Dendritic cell treated with granulocyte-macrophage colony-stimulating factor and Interleukin-4, amounts not matched to agents 40 ng/mL and 50 ng/mL, for 4 days (primary cell): ENCODE measurements at regions of chr9 and their contacts with region 1.

Region 1: DNA sequence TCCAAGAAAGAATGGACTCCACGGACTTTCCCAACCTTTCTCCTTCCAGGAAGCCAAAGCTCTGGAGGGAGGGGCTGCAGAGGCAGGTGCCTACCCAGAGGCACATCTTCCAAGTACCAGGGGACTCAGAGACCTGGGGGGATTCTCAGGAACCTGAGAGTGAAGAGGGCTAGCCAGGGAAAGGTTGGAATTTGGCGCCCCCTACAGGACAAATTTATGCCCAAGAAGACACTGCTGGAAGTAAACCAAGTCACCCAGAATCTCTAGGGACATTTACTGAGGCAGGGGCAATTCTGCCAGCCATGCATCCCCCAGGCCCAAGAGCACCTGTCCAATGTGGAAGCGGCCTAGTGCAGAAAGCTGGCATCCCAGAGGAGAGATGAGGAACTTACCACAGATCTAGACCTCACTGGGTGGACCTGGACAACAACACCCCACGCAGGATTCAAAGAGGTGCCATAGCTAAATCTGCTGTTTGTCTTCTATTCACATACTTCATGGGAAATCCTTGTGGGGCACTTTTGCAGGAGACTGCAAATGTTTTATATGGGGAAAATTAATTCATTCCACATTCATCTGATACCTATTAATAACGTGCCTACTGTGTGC is 25.9 kb upstream of the IDNK start:
- H3K4me3 Mint-ChIP-seq: no peak overlapping the region
- H3K27ac Mint-ChIP-seq: no peak overlapping the region
- H3K4me1 Mint-ChIP-seq: peaks cover 15% of the 10 kb centered on the region
- H3K27me3 Mint-ChIP-seq: no peaks in the 10 kb centered on the region

Region 2: GRCh38 chr9:83334320-83334719 is 262.7 kb before region 1 on chr9:
- intact Hi-C with region 1: loop called (anchors 1 kb)
- H3K4me3 Mint-ChIP-seq: no peak overlapping the region
- H3K27ac Mint-ChIP-seq: no peak overlapping the region
- H3K4me1 Mint-ChIP-seq: no peaks in the 10 kb centered on the region
- H3K27me3 Mint-ChIP-seq: no peaks in the 10 kb centered on the region